GM18951 (cell line): ENCODE measurements at regions of chrX and their contacts with region 1.

Region 1: DNA sequence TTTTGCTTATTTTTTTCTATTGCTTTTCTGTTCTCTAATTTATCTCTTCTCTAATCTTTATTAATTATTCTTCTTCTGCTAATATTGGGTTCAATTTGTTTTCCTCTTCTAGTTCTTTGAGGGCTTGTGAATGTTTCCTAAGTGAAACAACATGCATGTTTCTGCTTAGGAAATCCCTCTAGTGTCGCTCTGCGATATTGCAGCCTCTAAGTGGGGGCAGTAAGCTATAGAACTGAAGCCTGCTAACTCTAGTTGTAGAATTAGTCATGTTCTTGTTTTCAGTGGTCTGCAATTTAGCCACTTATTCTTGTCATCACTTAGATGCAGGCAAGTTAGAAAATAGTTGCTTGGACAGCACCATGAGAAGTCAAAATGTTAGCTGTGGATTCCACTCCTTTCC is 222.6 kb downstream of the SPIN4 start:
- POLR2A ChIP-seq: no peak

Region 2: DNA sequence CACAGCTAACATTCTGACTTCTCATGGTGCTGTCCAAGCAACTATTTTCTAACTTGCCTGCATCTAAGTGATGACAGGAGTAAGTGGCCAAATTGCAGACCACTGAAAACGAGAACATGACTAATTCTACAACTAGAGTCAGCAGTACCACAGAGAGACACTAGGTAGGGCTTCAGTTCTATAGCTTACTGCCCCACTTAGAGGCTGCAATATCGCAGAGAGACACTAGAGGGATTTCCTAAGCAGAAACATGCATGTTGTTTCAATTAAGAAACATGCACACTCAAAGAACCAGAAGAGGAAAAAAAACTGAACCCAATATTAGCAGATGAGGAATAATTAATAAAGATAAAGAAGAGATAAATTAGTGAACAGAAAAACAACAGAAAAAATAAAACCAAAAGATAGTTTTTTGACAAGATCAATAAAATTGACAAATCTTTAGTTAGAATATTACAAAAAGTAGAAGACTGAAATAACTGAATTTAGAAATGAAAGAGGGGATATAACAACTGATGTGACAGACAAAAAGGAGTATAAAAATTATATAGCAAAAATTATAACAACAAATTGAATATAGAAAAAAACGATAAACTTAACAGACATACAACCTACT is 121.9 kb after region 1 on chrX:
- in situ Hi-C with region 1: loop called (anchors 10 kb)
- POLR2A ChIP-seq: no peak

Region 3: DNA sequence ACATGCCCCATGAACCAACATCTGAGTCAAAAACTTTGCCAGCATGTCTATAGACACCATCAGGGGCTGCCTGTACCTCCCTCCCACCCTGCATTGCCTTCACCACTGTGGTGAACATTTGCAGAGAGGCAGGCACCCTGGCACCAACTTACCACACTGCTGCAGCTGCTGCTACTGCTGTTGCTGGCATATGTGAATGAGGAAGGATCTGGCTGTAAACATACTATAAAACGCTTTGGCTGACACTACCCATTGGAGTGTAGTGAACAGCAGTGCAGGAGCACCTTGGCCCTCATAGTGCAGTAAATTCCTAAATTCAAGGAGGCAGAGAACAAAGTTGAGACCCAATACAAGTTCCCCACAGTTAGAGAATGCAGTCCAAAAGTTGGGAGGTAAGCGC is 313.2 kb after region 1 on chrX:
- in situ Hi-C with region 1: no loop called
- POLR2A ChIP-seq: no peak

Region 4: DNA sequence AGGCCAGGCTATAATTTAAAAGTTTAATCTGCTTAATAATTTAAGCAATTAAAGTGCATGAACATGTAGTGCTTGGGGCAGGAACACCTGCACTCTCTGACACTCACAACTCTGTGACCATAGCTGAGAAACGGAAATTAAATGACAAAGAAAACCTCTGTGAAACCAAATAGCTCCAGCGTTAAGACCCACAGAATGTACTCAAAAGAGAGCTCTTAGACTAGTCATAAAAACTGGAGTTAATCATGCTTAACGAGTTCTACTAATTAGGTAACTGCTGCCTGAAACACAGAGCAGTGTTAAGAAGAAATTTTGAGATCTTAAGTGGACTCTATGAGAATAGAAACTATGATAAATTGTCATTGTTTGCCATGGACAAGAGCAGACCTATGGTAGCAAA is 397.0 kb after region 1 on chrX:
- in situ Hi-C with region 1: no loop called
- POLR2A ChIP-seq: no peak

Region 5: GRCh38 chrX:63657821-63658220 is 529.3 kb after region 1 on chrX:
- in situ Hi-C with region 1: no loop called
- POLR2A ChIP-seq: no peak

Region 6: GRCh38 chrX:63963095-63963784 is 834.7 kb after region 1 on chrX:
- in situ Hi-C with region 1: no loop called
- POLR2A ChIP-seq: no peak